Spleen (tissue), 13 donors: ENCODE measurements at regions of chr11 and their contacts with region 1.

Region 1: GRCh38 chr11:66694732-66695207 is 17.1 kb upstream of the RBM4B start:
- DNase-seq: peak; percentile 93
- H3K4me3 ChIP-seq: no peak overlapping the region
- H3K27ac ChIP-seq: no peak overlapping the region
- H3K4me1 ChIP-seq: peaks cover 0 to 11% (median 6%) of the 10 kb centered on the region in 6 donors
- H3K27me3 ChIP-seq: no peaks in the 10 kb centered on the region
- CTCF ChIP-seq: peak; percentile 84 to 97 (median 94)
- POLR2A ChIP-seq: no peak

Region 2: DNA sequence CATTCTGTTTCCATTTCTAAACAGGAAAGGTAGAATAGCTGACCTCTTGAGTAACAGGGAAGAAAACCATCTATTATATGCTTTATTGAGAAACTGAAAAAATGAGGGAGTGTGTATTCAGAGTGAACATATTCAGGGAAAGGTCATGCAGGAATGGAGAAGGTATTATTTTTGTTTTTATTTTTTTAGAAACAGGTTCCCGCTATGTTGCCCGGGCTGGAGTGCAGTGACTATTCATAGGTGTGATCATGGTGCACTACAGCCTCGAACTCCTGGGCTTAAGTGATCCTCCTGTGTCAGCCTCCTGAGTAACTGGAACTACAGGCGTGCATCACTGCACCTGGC is 139.7 kb after region 1 on chr11:
- intact Hi-C with region 1: loop called (anchors 1 kb)
- DNase-seq: no peak
- H3K4me3 ChIP-seq: no peak overlapping the region
- H3K27ac ChIP-seq: peak overlapping the region in 1 of 8 donors; percentile 22
- H3K4me1 ChIP-seq: peaks cover 2 to 33% (median 13%) of the 10 kb centered on the region in 6 donors
- H3K27me3 ChIP-seq: no peaks in the 10 kb centered on the region
- CTCF ChIP-seq: peak in 5 of 11 experiments; percentile 5 to 37 (median 15)
- POLR2A ChIP-seq: no peak

Region 3: DNA sequence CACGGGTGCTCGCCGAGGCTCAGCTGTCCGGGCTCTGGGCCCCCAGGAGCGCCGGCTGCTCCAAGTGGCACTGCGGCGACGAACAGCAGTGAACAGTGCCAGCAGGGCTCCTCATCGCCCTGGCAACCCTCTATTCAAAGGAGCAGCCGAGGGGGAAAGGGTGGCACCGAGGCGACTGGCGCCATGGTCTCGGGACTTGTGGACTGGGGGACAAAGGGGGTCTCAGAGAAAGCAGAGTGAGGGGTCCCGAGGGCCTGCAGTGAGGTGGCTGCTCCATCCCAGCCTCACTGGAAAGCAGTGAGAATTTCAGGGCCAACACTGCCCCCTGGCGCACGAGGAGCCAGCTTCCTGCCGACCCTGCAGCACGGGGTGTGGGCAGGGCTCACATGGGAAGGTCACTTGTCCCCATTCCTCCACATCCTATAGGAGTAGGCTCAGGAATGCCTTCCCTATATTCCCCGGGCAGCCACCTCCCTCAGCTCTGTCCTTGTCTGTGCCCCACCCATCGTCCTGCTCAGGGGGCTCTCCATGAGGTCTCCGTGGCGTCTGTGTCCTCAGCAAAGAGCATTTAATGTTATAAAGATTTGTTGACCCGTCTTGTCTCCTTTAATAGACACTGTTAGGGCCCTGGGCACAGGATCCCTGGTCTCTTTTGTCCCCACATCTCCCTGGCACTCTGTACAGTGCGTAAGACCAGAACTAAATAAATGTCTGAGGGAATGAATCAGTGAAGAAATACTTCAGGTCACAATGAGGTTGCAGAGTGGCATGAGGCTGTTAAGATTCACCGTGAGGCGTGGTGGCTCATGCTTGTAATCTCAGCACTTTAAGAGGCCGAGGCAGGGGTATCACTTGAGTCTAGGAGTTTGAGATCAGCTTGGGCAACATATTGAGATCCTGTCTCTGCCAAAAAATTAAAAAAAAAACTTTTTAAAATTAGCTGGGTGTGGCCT is 188.5 kb after region 1 on chr11:
- intact Hi-C with region 1: loop called (anchors 5 kb)
- DNase-seq: peak; percentile 87
- H3K4me3 ChIP-seq: no peak overlapping the region
- H3K27ac ChIP-seq: no peak overlapping the region
- H3K4me1 ChIP-seq: peaks cover 0 to 27% (median 14%) of the 10 kb centered on the region in 6 donors
- H3K27me3 ChIP-seq: peaks cover 0 to 5% (median 0%) of the 10 kb centered on the region in 7 donors
- CTCF ChIP-seq: peak; percentile 39 to 80 (median 71)
- POLR2A ChIP-seq: no peak